ENCODE measurements at regions of chr6 and their contacts with region 1.

Region 1: GRCh38 chr6:31068669-31069340 is 43.6 kb downstream of the C6orf15 start:
- DNase-seq: no peak
- H3K4me3 ChIP-seq: no peak overlapping the region
- CTCF ChIP-seq: peak; percentile 93

Region 2: DNA sequence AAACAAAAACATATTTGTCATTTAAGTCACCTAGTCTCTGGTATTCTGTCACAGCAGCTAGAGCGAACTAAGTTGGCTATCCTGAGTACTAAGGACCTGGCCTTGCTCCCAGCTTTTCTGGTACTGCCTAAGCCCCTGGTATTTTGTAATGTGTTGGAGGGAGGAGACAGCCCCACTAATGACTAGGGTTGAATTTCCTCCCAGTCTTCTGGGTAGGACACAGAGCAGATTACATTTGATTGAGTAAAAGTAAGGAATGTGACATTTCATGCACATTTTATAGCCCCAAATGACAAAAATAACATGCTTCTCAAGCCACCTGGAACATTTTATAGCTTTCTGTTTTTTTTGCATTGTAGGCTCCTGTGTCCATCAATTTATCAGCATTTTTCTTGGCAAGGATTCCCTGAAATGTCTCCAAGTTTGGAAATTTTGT is 232.4 kb before region 1 on chr6:
- CTCF ChIA-PET with region 1: interaction called, 18 read pairs
- POLR2A ChIA-PET with region 1: no interaction called
- DNase-seq: no peak
- H3K4me3 ChIP-seq: no peak overlapping the region
- CTCF ChIP-seq: no peak

Region 3: DNA sequence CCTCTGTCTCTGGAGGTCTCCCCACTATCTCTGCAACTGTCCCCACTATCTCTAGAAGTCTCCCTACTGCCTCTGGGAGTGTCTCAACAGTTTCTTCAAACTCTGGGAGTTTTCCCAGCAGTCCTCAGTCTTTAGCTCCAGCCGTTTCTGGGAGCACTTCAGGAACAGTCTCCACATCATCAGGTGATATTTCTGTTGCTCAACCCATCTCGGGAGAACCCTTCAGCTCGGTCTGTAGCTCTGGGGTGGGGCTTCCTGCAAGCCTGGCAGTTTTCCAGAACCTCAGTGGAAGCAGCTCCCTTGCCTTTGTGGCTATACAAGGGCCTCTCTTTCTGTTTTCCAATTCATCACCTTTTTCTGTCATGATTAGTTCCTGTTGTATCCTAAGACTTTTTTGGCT is 133.8 kb before region 1 on chr6:
- CTCF ChIA-PET with region 1: interaction called, 104 read pairs
- POLR2A ChIA-PET with region 1: no interaction called
- DNase-seq: no peak
- H3K4me3 ChIP-seq: no peak overlapping the region
- CTCF ChIP-seq: no peak

Region 4: DNA sequence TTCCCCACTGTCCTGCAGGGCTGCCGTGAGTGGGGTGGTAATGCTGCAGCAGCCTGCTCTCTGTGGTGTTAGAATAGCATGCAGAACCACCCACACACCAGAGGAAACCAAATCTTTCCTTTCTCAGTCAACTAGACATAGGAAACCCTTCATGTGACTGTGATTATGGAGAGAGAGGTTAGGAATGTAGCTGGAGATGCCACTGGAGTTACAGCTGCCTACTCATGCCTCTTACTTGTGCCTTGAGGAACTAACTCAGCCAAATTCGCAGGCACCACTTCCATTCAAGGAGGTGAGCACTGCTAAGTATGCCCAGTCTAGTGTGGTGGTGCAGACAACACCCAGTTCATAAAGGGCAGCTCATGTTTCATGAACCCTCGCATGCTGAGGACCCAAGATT is 31.1 kb before region 1 on chr6:
- CTCF ChIA-PET with region 1: interaction called, 45 read pairs
- POLR2A ChIA-PET with region 1: no interaction called
- DNase-seq: peak; percentile 67
- H3K4me3 ChIP-seq: no peak overlapping the region
- CTCF ChIP-seq: no peak

Region 5: DNA sequence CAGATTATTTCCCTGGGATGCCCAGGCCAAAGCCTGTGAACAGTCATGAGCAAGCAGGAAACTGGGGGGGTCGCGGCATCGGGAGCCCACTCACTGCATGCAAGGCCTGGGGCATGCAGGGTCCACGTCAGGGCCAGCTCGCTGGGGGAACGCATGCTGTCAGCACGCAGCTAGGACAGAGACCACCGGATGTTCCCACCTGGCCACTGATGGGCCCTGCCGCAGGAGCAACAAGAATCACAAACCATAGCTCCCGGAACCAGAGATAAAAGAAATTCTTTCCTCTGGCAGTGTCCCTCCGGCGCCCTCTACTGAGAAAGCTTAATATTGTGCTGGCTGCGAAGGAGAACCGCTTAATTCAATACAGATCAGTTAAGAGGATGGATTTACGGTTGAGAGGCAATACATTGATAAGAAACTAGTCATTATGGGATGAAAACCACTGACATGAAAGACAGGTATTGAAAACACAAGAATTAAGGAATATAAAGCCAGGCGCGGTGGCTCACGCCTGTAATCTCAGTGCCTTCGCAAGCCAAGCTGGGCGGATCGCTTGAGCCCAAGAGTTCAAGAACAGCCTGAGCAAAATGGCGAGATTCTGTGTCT is 11.0 kb after region 1 on chr6:
- CTCF ChIA-PET with region 1: interaction called, 101 read pairs
- POLR2A ChIA-PET with region 1: no interaction called
- DNase-seq: no peak
- H3K4me3 ChIP-seq: peak overlapping the region; percentile 13; the same call in 1 of the 2 replicates
- CTCF ChIP-seq: peak; percentile 68

Measured in AG04449 (cell line).